Natural killer cell (primary cell): ENCODE measurements at regions of chr15 and their contacts with region 1.

Region 1: GRCh38 chr15:93087825-93088199 is 1.2 kb downstream of the RGMA start:
- DNase-seq: peak; percentile 69 to 88
- ATAC-seq: peak; percentile 85 to 87 (median 85)
- H3K4me3 ChIP-seq: no peak overlapping the region
- H3K4me3 Mint-ChIP-seq: peak overlapping the region; percentile 92
- H3K27ac ChIP-seq: no peak overlapping the region
- H3K27ac Mint-ChIP-seq: no peak overlapping the region
- H3K4me1 ChIP-seq: peaks cover 20% of the 10 kb centered on the region
- H3K4me1 Mint-ChIP-seq: peaks cover 13 to 15% of the 10 kb centered on the region in 2 donors
- H3K27me3 ChIP-seq: peaks cover 43% of the 10 kb centered on the region
- H3K27me3 Mint-ChIP-seq: peaks cover 50 to 52% of the 10 kb centered on the region in 2 donors
- CTCF ChIP-seq: peak; percentile 94

Region 2: DNA sequence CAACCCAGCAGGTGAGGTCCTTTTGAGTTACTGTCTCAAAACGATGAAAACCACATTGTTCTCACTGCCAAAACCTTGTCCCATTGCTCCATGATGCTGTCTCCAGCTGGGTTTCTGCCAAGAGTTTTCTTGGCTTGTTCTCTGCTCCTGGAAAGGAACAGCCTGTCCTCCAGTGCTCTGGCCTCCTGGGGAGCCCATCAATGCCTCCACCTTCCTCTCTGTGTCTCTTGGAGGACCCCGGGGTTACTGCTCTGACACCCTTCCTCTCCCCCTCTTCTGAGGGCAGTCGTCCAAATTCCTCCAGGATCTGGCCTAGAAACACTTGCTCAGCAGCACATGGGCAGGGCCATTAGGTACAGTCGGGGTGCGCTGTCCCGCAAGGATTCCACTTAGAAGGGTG is 65.1 kb after region 1 on chr15:
- intact Hi-C with region 1: loop called (anchors 5 kb)
- DNase-seq: no peak
- ATAC-seq: no peak
- H3K4me3 ChIP-seq: no peak overlapping the region
- H3K4me3 Mint-ChIP-seq: peak overlapping the region; percentile 85
- H3K27ac ChIP-seq: no peak overlapping the region
- H3K27ac Mint-ChIP-seq: peak overlapping the region in 1 of 2 donors; percentile 75
- H3K4me1 ChIP-seq: peaks cover 28% of the 10 kb centered on the region
- H3K4me1 Mint-ChIP-seq: peaks cover 28 to 34% of the 10 kb centered on the region in 2 donors
- H3K27me3 ChIP-seq: peaks cover 6% of the 10 kb centered on the region
- H3K27me3 Mint-ChIP-seq: peaks cover 24 to 56% of the 10 kb centered on the region in 2 donors
- CTCF ChIP-seq: no peak

Region 3: GRCh38 chr15:93495799-93496637 is 408.2 kb after region 1 on chr15:
- intact Hi-C with region 1: no loop called
- DNase-seq: no peak
- ATAC-seq: no peak
- H3K4me3 ChIP-seq: no peak overlapping the region
- H3K4me3 Mint-ChIP-seq: no peak overlapping the region
- H3K27ac ChIP-seq: no peak overlapping the region
- H3K27ac Mint-ChIP-seq: no peak overlapping the region
- H3K4me1 ChIP-seq: no peaks in the 10 kb centered on the region
- H3K4me1 Mint-ChIP-seq: no peaks in the 10 kb centered on the region
- H3K27me3 ChIP-seq: no peaks in the 10 kb centered on the region
- H3K27me3 Mint-ChIP-seq: peaks cover 10 to 38% of the 10 kb centered on the region in 2 donors
- CTCF ChIP-seq: no peak